Heart left ventricle (tissue), 16 donors: ENCODE measurements at regions of chr6 and their contacts with region 1.

Region 1: DNA sequence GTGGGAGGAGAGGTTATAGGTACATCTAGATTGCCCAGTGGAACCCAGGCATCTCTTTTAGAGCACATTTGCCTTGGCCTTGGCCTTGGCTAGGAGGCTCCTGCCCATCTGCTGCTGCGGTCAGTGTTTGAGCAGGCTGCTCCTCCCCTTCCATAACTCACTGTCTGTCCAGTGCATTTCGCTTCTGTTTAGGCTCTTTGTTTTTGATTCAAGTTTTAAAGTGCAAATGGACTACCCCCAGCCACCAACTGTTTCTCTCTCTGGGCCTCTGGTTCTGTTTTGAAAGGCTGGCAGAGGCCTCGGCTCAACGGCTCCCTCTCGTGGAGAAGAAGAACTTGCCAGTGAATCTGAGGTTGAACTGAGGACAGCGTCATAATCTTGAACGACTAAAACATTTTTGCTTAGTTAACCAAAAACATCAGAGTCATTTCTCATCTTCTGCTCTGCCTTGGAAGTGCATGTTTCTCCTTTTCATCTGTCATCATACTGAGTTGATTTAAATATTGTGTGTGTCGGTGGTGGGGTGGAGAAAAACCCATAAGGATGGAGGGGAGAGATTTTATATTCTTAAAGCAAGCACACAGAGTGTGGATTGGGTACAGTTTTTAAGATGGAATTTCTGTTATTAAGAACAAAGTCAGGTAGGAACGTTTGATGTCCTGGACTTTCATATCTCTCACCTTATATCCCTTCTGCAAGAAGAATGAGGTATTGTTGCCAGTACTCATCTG is 171.4 kb downstream of the DTNBP1 start:
- DNase-seq: peak in 4 of 5 donors; percentile 71 to 81 (median 80)
- ATAC-seq: peak; percentile 43 to 69 (median 62)
- H3K4me3 ChIP-seq: no peak overlapping the region
- H3K27ac ChIP-seq: peak overlapping the region in 7 of 12 donors; percentile 14 to 58 (median 32)
- H3K4me1 ChIP-seq: peaks cover 0 to 47% (median 30%) of the 10 kb centered on the region in 12 donors
- H3K27me3 ChIP-seq: no peaks in the 10 kb centered on the region
- CTCF ChIP-seq: peak; percentile 89 to 98 (median 96)
- POLR2A ChIP-seq: no peak

Region 2: GRCh38 chr6:14129575-14129974 is 1361.8 kb before region 1 on chr6:
- intact Hi-C with region 1: loop called in 2 of 10 experiments (anchors 5 kb)
- DNase-seq: peak in 4 of 5 donors; percentile 54 to 57 (median 56)
- ATAC-seq: peak; percentile 71 to 94 (median 90)
- H3K4me3 ChIP-seq: no peak overlapping the region
- H3K27ac ChIP-seq: no peak overlapping the region
- H3K4me1 ChIP-seq: peaks cover 0 to 14% (median 2%) of the 10 kb centered on the region in 12 donors
- H3K27me3 ChIP-seq: no peaks in the 10 kb centered on the region
- CTCF ChIP-seq: peak; percentile 41 to 78 (median 64)
- POLR2A ChIP-seq: no peak

Region 3: DNA sequence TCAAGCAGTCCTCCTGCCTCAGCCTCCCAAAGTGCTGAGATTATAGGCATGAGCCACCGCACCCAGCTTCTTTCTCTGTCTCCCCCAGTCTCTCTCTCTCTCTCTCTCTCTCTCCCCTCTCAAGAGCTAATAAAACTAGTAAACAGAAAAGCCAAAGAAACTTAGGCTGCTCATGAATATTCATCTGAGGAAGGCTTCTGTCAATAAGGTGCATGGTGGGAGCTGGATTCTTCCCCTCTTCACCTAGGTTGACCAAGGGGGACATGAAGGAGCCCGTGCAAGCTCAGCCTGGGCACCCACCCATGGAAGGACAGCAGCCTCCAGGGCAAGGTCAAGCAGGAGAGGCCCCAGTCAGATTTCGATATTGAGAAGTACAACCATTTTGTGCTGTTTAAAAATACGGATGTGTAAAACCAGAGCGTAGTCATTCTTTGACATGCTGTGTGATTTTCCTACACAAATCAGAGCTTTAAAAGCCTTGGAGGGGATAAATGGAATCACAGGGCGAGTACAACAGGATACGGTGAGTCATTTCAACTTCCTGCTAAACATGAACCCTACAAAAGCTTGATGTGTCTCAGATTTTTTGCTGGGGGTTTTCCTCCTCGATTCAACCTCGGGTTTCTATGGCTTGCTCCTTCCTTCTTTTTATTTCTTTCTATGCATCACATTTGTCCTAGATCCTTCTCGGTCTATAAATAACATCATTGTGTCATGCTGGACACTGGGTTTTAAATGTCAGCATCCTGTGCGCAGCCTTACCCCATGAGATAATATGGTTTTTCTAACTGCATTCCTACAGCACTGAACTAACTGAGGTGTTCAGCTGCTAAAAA is 614.4 kb before region 1 on chr6:
- intact Hi-C with region 1: loop called in 2 of 10 experiments (anchors 10 kb)
- DNase-seq: peak in 1 of 5 donors; percentile 37
- ATAC-seq: peak; percentile 86 to 94 (median 90)
- H3K4me3 ChIP-seq: no peak overlapping the region
- H3K27ac ChIP-seq: peak overlapping the region; percentile 63 to 91 (median 75)
- H3K4me1 ChIP-seq: peaks cover 4 to 63% (median 34%) of the 10 kb centered on the region in 12 donors
- H3K27me3 ChIP-seq: no peaks in the 10 kb centered on the region
- CTCF ChIP-seq: no peak
- POLR2A ChIP-seq: no peak

Region 4: DNA sequence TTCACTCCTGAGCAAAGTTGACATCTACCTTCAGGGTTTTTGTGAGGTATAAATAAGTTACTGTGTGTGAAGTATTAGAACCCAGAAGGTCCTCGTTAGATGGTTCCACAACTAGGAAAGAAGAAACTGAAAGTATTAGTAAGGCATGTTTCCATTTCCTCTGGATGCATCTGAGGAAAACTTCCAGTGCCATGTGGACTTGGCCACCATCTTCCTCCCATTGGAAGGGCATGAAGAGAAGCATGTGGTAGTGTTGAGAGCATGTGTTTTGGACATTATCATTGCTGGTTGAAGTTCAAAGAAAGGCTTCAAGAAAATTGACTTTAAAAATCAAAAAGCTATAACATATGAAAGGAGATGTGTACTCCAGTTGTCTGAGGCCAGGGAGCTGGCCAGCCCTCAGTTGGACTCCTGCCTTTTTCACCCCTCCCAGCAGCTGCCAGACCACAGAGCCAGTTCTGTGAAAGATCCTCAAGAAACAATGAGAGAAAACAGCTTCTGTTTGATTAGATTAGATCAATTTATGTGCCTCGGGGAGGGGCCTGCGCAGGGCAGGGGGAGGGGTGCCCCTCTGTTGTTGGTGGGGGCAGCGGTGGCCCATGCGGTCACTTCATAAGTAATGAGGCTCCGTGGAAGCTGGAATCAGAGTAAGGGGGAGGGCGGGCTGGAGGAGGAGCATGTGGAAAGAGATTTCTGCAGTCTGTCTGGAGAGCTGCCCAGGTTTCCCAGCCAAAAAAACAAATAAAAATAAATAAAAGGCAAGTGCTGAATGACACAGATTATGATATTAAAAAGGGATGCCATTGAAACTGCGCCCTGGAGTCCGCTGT is 91.6 kb before region 1 on chr6:
- intact Hi-C with region 1: loop called in 1 of 10 experiments (anchors 5 kb)
- DNase-seq: peak; percentile 77 to 86 (median 82)
- ATAC-seq: peak; percentile 79 to 89 (median 86)
- H3K4me3 ChIP-seq: peak overlapping the region in 10 of 12 donors; percentile 32 to 57 (median 50)
- H3K27ac ChIP-seq: peak overlapping the region in 11 of 12 donors; percentile 43 to 84 (median 71)
- H3K4me1 ChIP-seq: peaks cover 4 to 72% (median 53%) of the 10 kb centered on the region in 12 donors
- H3K27me3 ChIP-seq: no peaks in the 10 kb centered on the region
- CTCF ChIP-seq: no peak
- POLR2A ChIP-seq: no peak

Region 5: DNA sequence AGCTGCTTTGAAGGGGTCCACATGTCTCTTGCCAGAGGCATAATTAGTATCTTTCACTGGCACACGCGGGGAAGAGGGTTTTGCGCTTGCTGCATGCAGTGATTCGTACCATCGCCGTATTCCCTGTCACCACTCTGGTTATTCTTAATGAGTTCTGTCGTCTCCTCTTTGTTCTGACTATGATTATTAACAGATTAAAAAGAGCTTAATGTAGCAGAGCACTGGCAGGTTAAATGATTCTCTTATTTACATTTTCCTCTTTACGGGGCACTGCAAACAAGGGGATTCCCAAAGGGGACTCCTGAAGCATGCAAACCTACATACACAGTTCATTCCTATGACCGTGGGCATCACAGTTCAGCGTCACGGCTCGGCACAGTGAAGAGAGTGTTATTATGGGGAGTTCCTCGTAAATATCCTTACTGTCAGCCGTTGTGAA is 33.4 kb before region 1 on chr6:
- intact Hi-C with region 1: loop called in 1 of 10 experiments (anchors 5 kb)
- DNase-seq: no peak
- ATAC-seq: peak in 1 of 4 donors; percentile 15
- H3K4me3 ChIP-seq: peak overlapping the region in 5 of 12 donors; percentile 0 to 30 (median 10)
- H3K27ac ChIP-seq: peak overlapping the region in 1 of 12 donors; percentile 9
- H3K4me1 ChIP-seq: peaks cover 0 to 63% (median 32%) of the 10 kb centered on the region in 12 donors
- H3K27me3 ChIP-seq: no peaks in the 10 kb centered on the region
- CTCF ChIP-seq: no peak
- POLR2A ChIP-seq: no peak